AG04450 (cell line): ENCODE measurements at regions of chr12 and their contacts with region 1.

Region 1: DNA sequence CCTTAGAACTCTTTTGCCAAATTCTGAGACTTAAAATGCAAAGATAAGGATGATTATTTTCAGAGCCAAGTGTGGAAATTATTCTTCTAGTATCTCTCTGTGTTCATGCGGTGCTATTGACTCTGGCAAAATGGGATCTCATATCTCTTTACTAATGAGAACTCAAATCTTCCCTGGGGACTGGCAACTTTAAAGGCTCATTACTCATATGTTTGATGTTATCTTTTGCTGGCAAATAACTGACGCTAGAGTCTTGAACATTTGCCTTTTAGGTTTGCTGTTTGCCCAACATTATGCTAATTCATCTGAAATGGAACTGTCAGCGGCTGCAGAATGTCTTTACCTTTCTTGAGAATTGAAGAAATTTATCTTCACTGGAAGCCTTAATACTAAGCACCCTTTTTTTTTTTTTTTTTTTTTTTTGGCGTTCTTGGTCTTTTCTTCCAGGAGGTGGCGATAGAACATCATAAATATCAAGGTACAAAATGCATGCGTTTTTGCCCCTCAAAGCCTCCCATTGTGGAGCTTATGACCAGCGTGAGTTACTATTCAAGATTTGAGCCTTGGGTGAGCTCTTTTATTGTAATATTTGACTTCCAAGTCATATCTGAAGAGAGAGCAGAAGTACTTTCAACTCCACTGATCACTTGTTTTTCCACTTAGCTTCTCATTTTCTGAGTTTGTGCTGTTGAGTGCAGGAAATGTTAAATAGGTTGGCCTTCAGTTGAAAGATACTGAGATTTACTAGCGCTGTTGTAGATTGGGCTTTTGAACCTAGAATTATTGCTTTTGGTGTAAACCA is 86.6 kb downstream of the CAND1 start:
- DNase-seq: peak; percentile 20
- H3K4me3 ChIP-seq: no peak overlapping the region
- H3K27ac ChIP-seq: no peak overlapping the region
- H3K27me3 ChIP-seq: no peaks in the 10 kb centered on the region
- CTCF ChIP-seq: peak; percentile 66

Region 2: DNA sequence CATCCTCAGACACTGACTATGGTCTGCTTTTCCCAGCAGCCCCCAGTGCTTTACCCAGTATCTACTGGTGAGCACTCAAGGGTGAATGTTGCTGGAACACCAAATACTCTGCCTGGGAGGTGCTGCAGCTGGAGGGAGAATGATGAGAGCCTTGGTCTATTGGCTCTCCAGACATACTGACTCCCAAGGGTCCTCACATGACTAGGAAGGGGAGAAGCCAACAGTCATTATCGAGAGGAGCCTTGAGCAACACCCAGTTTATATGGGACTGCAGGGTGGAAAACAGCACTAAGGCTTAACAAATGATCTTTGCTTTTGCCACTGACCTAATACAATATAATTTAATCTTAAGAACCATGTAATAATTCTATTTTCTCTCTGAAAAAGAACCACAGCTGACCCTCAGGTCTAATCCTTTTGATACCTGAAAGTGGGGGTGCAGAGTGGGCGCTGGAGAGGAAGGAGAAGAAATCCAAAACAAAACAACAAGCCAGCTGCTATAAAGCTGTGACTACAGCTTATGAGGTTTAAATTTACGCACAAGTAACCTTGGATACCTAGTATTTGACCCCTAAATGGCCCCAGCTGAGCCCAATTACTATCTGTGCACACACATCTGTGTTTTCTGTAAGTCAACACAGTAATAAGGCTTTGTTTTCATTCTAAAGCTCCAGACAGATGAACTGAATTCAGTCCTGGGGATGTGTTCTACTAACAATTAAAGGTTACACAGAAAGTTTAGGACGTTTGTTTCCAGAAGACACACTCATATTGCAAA is 569.1 kb before region 1 on chr12:
- CTCF ChIA-PET with region 1: no interaction called
- POLR2A ChIA-PET with region 1: no interaction called
- DNase-seq: no peak
- H3K4me3 ChIP-seq: no peak overlapping the region
- H3K27ac ChIP-seq: no peak overlapping the region
- H3K27me3 ChIP-seq: no peaks in the 10 kb centered on the region
- CTCF ChIP-seq: no peak

Region 3: GRCh38 chr12:67002720-67003119 is 353.1 kb before region 1 on chr12:
- CTCF ChIA-PET with region 1: no interaction called
- POLR2A ChIA-PET with region 1: no interaction called
- DNase-seq: no peak
- H3K4me3 ChIP-seq: no peak overlapping the region
- H3K27ac ChIP-seq: no peak overlapping the region
- H3K27me3 ChIP-seq: no peaks in the 10 kb centered on the region
- CTCF ChIP-seq: no peak

Region 4: DNA sequence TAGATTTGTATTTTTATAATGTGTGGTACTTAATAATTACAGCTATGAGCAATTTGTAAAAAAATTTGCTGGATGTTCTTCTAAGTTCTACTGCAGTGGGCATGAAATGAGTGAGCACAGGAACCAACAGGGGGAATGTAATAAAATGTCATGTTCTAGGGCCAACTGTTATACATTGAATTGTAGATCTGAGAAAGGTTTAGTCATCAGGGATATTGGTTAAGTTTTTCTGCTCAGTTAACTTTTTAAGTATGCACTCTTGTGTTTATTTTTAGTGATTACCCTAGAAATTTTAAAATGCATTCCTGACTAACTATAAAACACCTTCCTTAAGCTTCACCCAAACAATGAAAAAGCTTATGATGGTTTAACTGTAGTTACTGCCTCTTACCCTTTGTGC is 15.2 kb after region 1 on chr12:
- CTCF ChIA-PET with region 1: interaction called, 11 read pairs
- POLR2A ChIA-PET with region 1: no interaction called
- DNase-seq: no peak
- H3K4me3 ChIP-seq: no peak overlapping the region
- H3K27ac ChIP-seq: no peak overlapping the region
- H3K27me3 ChIP-seq: no peaks in the 10 kb centered on the region
- CTCF ChIP-seq: no peak

Region 5: DNA sequence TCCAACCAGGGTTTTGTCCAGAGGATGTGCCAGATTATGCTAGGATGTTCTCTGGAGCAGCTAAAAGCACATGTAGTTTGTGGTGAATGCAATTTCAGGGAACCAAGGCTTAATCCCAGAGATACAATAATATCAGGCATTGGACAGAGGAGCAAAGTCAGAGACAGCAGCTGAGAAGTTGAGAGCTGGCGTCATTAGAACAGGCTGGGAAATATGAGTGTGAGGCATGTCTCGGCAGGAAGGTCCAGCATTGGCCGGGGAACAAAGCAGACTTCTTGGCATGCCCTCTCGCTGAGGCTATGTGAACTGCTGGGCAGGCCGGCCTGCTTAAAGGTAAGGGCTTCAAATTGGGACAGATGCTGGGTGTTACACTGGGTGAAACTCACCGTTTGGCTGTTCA is 38.8 kb after region 1 on chr12:
- CTCF ChIA-PET with region 1: no interaction called
- POLR2A ChIA-PET with region 1: no interaction called
- DNase-seq: peak; percentile 18
- H3K4me3 ChIP-seq: no peak overlapping the region
- H3K27ac ChIP-seq: no peak overlapping the region
- H3K27me3 ChIP-seq: no peaks in the 10 kb centered on the region
- CTCF ChIP-seq: peak; percentile 39

Region 6: GRCh38 chr12:67433385-67434175 is 77.8 kb after region 1 on chr12:
- CTCF ChIA-PET with region 1: interaction called, 141 read pairs
- POLR2A ChIA-PET with region 1: no interaction called
- DNase-seq: no peak
- H3K4me3 ChIP-seq: no peak overlapping the region
- H3K27ac ChIP-seq: peak overlapping the region; percentile 89
- H3K27me3 ChIP-seq: no peaks in the 10 kb centered on the region
- CTCF ChIP-seq: no peak

Region 7: GRCh38 chr12:67452119-67452805 is 96.5 kb after region 1 on chr12:
- CTCF ChIA-PET with region 1: interaction called, 11 read pairs
- POLR2A ChIA-PET with region 1: no interaction called
- DNase-seq: no peak
- H3K4me3 ChIP-seq: no peak overlapping the region
- H3K27ac ChIP-seq: no peak overlapping the region
- H3K27me3 ChIP-seq: no peaks in the 10 kb centered on the region
- CTCF ChIP-seq: no peak

Region 8: GRCh38 chr12:67477681-67478265 is 122.0 kb after region 1 on chr12:
- CTCF ChIA-PET with region 1: no interaction called
- POLR2A ChIA-PET with region 1: no interaction called
- DNase-seq: no peak
- H3K4me3 ChIP-seq: no peak overlapping the region
- H3K27ac ChIP-seq: no peak overlapping the region
- H3K27me3 ChIP-seq: no peaks in the 10 kb centered on the region
- CTCF ChIP-seq: no peak

Region 9: GRCh38 chr12:67661311-67662021 is 305.7 kb after region 1 on chr12:
- CTCF ChIA-PET with region 1: interaction called, 10 read pairs
- POLR2A ChIA-PET with region 1: no interaction called
- DNase-seq: no peak
- H3K4me3 ChIP-seq: no peak overlapping the region
- H3K27ac ChIP-seq: no peak overlapping the region
- H3K27me3 ChIP-seq: no peaks in the 10 kb centered on the region
- CTCF ChIP-seq: no peak

Region 10: DNA sequence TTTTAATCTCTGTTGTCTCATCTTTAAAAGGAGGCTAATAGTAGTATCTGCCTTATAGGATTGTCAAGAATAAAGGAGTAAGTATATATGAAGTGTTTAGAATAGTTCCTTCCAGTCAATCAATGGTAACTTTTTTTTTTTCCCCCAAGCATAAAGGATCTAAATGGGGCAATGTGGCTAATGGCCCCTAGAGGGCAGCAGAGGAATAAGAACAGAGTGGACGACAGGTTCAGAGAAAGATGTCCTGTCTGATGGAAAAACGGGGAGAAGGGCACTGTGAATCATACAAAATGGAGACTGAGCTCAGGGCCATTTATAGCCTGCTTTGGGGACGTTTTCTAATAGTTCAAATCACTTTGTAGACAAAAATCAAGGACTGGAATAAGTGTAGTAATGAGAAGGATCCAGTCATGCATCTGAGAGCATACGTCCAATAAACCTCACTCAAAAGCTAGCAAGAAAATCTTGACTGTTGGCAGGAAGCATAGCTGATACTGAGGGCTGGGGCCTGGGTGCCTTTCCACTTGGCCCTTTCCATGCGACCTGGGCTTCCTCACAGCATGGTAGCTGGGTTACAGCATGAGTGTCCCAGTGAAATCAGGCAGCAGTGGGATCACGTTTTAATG is 684.8 kb after region 1 on chr12:
- CTCF ChIA-PET with region 1: interaction called, 33 read pairs
- POLR2A ChIA-PET with region 1: no interaction called
- DNase-seq: peak; percentile 45
- H3K4me3 ChIP-seq: no peak overlapping the region
- H3K27ac ChIP-seq: no peak overlapping the region
- H3K27me3 ChIP-seq: peaks cover 2% of the 10 kb centered on the region
- CTCF ChIP-seq: peak; percentile 93